Sigmoid colon (tissue), 7 donors: ENCODE measurements at regions of chrX and their contacts with region 1.

Region 1: GRCh38 chrX:74133156-74133796 is 170.7 kb upstream of the ZCCHC13 start:
- DNase-seq: no peak
- H3K4me3 ChIP-seq: no peak overlapping the region
- H3K27ac ChIP-seq: peak overlapping the region in 3 of 4 donors; percentile 15 to 23 (median 22)
- H3K4me1 ChIP-seq: peaks cover 0 to 7% (median 2%) of the 10 kb centered on the region in 4 donors
- H3K27me3 ChIP-seq: no peaks in the 10 kb centered on the region
- CTCF ChIP-seq: peak; percentile 41 to 77 (median 45)
- EP300 ChIP-seq: no peak
- POLR2A ChIP-seq: no peak

Region 2: DNA sequence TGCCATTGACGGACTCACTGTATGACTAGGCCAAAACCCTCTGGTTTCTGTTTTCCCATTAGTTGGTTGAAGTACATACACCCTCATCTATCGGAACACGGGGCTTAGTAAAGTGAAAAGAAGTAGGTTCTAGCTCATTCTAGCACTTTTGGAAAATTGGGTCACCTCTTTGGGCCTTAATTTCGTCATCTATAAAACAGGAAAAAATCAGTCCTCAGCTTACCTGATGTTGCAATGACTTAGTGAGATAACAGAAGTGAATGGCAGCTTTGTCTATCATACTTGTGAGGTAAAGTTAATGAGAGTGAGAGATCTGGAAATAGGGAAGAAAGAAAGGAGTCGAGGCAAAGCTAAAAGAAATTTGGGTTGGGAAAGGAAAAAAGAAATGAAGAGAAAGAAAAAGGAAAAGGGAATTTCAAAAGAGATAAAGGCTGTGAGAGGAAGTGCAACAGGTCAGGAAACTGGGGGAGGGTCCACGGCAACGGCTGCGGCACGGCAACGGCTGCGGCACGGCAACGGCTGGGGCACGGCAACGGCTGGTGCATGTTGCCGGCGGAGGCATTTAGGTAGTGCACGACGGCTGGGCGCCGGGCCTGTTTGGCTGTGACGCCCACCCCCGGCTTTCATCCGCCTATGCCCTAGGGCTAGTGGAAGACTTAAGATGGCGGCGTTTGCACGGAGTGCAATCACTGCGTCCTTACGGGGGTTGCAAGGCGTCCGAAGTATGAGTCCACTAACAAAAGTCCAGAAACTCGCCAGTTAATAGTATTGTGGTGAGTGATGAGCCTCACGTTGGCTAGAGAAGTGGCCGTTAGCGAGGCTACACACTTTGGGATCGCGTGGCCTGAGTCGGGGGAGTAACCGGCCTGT is 189.3 kb before region 1 on chrX:
- intact Hi-C with region 1: loop called (anchors 10 kb)
- DNase-seq: peak; percentile 95
- H3K4me3 ChIP-seq: peak overlapping the region; percentile 58 to 78 (median 62)
- H3K27ac ChIP-seq: peak overlapping the region; percentile 81 to 88 (median 85)
- H3K4me1 ChIP-seq: peaks cover 0 to 22% (median 2%) of the 10 kb centered on the region in 4 donors
- H3K27me3 ChIP-seq: no peaks in the 10 kb centered on the region
- CTCF ChIP-seq: no peak
- EP300 ChIP-seq: no peak
- POLR2A ChIP-seq: no peak

Region 3: DNA sequence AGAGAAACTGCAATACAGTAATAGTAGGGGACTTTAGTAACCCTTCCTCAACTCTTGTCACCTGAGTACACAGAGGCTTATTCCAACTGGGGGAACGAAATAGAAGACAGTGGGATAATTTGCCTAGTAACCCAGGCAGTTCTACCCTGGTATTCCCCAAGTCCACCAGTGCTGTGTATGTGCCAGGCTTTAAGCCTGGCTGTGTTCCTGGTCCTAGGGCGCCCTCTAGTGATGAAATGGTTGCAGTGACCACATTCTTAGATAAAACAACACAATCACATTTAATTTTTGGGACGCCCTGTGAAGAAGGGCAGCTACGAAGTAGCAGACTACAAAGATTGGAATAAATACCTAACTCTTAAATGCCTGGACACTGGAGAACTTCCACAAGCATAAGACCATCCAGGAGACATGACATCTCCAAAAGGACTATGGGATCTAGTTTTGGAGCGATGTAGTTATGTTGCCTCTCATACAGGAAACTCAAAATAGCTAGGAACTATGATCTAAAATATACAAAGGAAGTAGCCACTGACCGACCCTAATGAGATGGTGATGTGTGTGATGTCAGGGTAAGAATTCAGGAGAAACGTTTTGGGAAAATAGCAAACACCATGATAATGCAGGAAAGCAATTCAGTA is 117.8 kb before region 1 on chrX:
- intact Hi-C with region 1: loop called (anchors 2 kb)
- DNase-seq: peak; percentile 77
- H3K4me3 ChIP-seq: no peak overlapping the region
- H3K27ac ChIP-seq: no peak overlapping the region
- H3K4me1 ChIP-seq: no peaks in the 10 kb centered on the region
- H3K27me3 ChIP-seq: no peaks in the 10 kb centered on the region
- CTCF ChIP-seq: peak; percentile 36 to 51 (median 49)
- EP300 ChIP-seq: no peak
- POLR2A ChIP-seq: no peak

Region 4: GRCh38 chrX:74343343-74344279 is 210.3 kb after region 1 on chrX:
- intact Hi-C with region 1: loop called (anchors 10 kb)
- DNase-seq: no peak
- H3K4me3 ChIP-seq: no peak overlapping the region
- H3K27ac ChIP-seq: no peak overlapping the region
- H3K4me1 ChIP-seq: no peaks in the 10 kb centered on the region
- H3K27me3 ChIP-seq: no peaks in the 10 kb centered on the region
- CTCF ChIP-seq: peak in 3 of 4 experiments; percentile 33 to 52 (median 39)
- EP300 ChIP-seq: no peak
- POLR2A ChIP-seq: no peak